Upper lobe of right lung (tissue), 1 donor: ENCODE measurements at regions of chr1 and their contacts with region 1.

Region 1: DNA sequence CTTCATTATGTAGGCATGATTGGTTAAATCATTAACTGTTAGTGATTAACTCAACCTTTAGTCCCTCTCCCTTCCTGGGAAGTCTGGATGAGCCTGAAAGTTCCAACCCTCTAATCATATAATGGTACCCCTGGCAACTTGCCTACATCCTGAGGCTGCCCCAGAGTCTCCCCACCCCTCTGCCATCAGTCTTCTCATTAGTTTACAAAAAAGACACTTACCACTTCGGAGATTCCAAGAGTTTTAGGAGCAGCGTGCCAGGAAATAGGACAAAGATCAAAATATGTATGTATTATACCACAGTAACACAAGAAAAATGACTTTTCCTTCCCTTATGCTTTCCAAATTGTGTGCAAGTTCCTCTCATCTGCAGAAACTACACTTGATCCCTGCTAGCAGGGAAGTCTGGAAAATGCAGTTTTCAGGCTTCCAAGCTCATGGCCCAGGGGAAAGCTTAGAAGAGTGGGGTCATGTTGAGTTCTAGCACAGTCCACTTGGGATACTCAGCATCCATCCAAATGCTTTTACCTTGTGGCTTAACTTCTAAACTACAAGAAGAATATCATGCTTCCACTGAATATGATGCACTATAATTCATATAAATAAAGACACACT is 64.6 kb upstream of the PPIH start:
- DNase-seq: no peak
- ATAC-seq: no peak
- H3K4me3 ChIP-seq: no peak overlapping the region
- H3K27ac ChIP-seq: no peak overlapping the region
- H3K4me1 ChIP-seq: no peaks in the 10 kb centered on the region
- H3K27me3 ChIP-seq: no peaks in the 10 kb centered on the region
- CTCF ChIP-seq: no peak

Region 2: GRCh38 chr1:42282024-42282579 is 311.5 kb before region 1 on chr1:
- intact Hi-C with region 1: no loop called
- DNase-seq: no peak
- ATAC-seq: peak; percentile 47
- H3K4me3 ChIP-seq: no peak overlapping the region
- H3K27ac ChIP-seq: no peak overlapping the region
- H3K4me1 ChIP-seq: peaks cover 12% of the 10 kb centered on the region
- H3K27me3 ChIP-seq: no peaks in the 10 kb centered on the region
- CTCF ChIP-seq: no peak

Region 3: GRCh38 chr1:42490237-42490636 is 103.4 kb before region 1 on chr1:
- intact Hi-C with region 1: no loop called
- DNase-seq: no peak
- ATAC-seq: no peak
- H3K4me3 ChIP-seq: no peak overlapping the region
- H3K27ac ChIP-seq: no peak overlapping the region
- H3K4me1 ChIP-seq: no peaks in the 10 kb centered on the region
- H3K27me3 ChIP-seq: no peaks in the 10 kb centered on the region
- CTCF ChIP-seq: no peak

Region 4: GRCh38 chr1:42682739-42683531 is 89.3 kb after region 1 on chr1:
- intact Hi-C with region 1: no loop called
- DNase-seq: peak; percentile 92
- ATAC-seq: peak; percentile 85
- H3K4me3 ChIP-seq: peak overlapping the region; percentile 79
- H3K27ac ChIP-seq: peak overlapping the region; percentile 94
- H3K4me1 ChIP-seq: peaks cover 55% of the 10 kb centered on the region
- H3K27me3 ChIP-seq: no peaks in the 10 kb centered on the region
- CTCF ChIP-seq: no peak

Region 5: GRCh38 chr1:42747125-42747524 is 153.5 kb after region 1 on chr1:
- intact Hi-C with region 1: loop called (anchors 10 kb)
- DNase-seq: no peak
- ATAC-seq: peak; percentile 64
- H3K4me3 ChIP-seq: no peak overlapping the region
- H3K27ac ChIP-seq: no peak overlapping the region
- H3K4me1 ChIP-seq: no peaks in the 10 kb centered on the region
- H3K27me3 ChIP-seq: no peaks in the 10 kb centered on the region
- CTCF ChIP-seq: peak; percentile 55